HepG2 (cell line): ENCODE measurements at regions of chr1 and their contacts with region 1.

Region 1: GRCh38 chr1:230753586-230754251 is 6.5 kb downstream of the CAPN9 start:
- DNase-seq: peak; percentile 30
- ATAC-seq: peak; percentile 57
- H3K4me3 ChIP-seq: peak overlapping the region; percentile 35 to 68 (median 57)
- H3K27ac ChIP-seq: peak overlapping the region; percentile 40
- H3K4me1 ChIP-seq: peaks cover 88% of the 10 kb centered on the region
- H3K27me3 ChIP-seq: no peaks in the 10 kb centered on the region
- CTCF ChIP-seq: no peak
- EP300 ChIP-seq: no peak
- POLR2A ChIP-seq: no peak
- RAD21 ChIP-seq: no peak

Region 2: GRCh38 chr1:230728710-230729392 is 24.9 kb before region 1 on chr1:
- CTCF ChIA-PET with region 1: no interaction called
- POLR2A ChIA-PET with region 1: interaction called, 4 read pairs
- in situ Hi-C with region 1: no loop called
- intact Hi-C with region 1: loop called (anchors 2 kb)
- DNase-seq: peak; percentile 95
- ATAC-seq: peak; percentile 94
- H3K4me3 ChIP-seq: peak overlapping the region; percentile 3 to 63 (median 36); a peak in 4 of 6 replicates
- H3K27ac ChIP-seq: peak overlapping the region; percentile 94
- H3K4me1 ChIP-seq: peaks cover 94% of the 10 kb centered on the region
- H3K27me3 ChIP-seq: no peaks in the 10 kb centered on the region
- CTCF ChIP-seq: peak; percentile 38
- EP300 ChIP-seq: peak; percentile 89 to 96
- POLR2A ChIP-seq: peak in 1 of 2 experiments; percentile 60; a peak in 2 of 4 replicates
- RAD21 ChIP-seq: peak; percentile 54